Astrocyte of the spinal cord (primary cell): ENCODE measurements at regions of chr9 and their contacts with region 1.

Region 1: GRCh38 chr9:34578241-34579103 is 11.1 kb downstream of the CNTFR start:
- DNase-seq: peak; percentile 31
- H3K4me3 ChIP-seq: no peak overlapping the region
- CTCF ChIP-seq: no peak

Region 2: GRCh38 chr9:34500623-34501267 is 77.7 kb before region 1 on chr9:
- in situ Hi-C with region 1: loop called (anchors 10 kb)
- DNase-seq: peak; percentile 19
- H3K4me3 ChIP-seq: no peak overlapping the region
- CTCF ChIP-seq: peak; percentile 99